ENCODE measurements at regions of chr4 and their contacts with region 1.

Region 1: DNA sequence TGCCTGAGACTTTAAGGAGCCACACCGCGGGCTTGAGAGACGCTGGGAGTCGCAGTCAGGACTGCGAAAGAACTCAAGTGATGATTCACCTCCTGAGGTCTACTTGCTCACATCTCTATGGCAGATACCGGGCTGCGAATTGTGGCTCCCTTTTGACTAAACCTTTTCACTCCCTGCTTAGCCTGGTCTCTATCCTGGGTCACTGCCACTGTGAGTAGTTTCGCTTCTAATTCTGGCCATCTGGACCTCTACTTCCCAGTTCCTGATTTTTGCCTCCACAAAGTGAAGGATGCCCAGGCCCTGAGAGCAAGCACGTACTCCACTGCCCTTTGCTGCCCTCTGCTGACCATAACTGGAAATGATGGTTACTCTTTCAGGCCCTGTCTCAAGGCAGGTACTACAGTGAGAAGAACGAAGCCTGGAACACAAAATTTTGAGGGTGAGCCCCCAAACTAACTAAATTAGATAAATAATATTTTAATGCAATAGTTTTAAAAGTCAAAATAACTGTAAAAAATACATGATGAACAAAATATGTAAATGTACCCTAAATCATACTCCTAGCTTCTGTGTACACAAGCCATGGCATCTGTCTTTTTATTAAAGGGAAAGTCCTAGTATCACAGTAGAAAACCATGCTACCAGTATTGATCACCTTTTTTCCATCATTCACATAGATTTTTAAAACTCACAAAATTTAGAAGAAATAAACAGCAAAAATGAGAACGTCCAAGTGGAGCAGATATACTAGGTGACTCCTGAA is 16.7 kb downstream of the MAD2L1 start:
- DNase-seq: no peak
- ATAC-seq: peak; percentile 94

Region 2: GRCh38 chr4:119314356-119314755 is 735.6 kb before region 1 on chr4:
- intact Hi-C with region 1: loop called (anchors 2 kb)
- DNase-seq: no peak
- ATAC-seq: peak; percentile 69

Region 3: DNA sequence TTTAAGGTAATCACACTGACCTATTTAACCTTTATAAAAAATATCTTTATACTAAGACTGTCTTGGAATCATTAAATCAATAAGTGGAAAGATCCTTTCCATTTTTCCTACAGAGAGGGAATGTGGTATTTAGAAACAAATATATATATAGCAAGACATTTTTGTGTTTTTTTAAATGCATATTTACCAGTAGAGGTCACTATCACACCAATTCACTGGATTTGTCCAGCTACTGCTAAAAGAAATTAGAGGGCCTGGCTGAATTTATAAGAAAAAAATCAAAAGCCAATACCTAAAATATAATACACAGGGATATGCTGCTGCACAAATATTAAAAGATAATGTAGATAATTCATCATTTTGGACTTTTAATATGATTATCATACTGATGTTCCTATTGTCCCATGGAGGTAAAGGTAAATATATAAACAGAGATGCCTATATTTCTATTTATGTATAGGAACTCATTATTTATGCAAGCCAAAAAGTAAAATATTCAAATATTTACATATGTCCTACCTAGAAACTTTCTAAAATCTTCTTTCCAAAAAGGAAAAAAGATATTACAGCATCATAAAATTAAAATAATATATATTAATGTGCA is 490.8 kb before region 1 on chr4:
- intact Hi-C with region 1: loop called (anchors 5 kb)
- DNase-seq: no peak
- ATAC-seq: no peak

Region 4: DNA sequence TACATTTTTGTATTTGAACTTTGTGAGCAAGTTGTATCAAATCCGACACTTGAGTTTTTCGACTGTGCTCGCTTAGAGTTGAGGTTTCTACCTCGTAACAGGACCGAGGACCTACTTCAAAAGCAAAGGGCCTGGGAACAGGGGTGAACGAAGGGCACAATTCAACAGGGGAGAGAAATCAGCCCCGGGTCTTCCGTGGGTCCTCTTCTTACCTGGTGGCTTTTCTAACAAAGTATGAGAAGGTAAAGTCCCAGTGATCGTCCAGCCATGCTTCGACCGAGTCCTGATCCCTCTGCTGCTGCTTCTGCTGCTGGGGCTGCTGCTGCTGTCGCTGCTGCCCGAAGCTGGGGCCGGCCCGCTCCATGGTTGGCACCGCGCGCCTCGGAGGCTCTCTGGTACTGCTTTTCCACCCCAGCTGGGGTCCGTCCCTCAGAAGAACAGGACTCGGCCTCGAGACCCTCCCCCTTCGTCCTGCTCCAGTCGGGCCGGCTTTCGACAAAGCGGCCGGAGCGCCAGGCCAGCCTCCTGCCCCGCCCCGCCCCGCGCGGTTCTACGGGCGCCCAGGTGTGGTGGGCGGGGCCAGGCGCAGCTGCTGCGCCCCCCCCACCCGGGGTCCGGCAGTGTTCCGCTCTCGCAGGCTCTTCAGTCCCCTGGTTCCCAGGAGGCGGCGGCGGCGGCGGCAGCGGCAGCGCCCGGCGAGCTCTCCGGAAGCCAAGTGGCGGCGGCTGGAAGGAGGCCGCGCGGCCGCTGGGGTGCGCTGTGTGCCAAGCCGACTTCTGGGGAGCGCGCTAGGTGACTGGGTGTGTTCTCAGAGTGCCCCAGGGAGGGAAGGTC is 421.4 kb before region 1 on chr4 and contains the start of gene PDE5A:
- intact Hi-C with region 1: loop called (anchors 2 kb)
- DNase-seq: peak; percentile 88
- ATAC-seq: peak; percentile 87
- total RNA-seq, gene PDE5A: 7.4 TPM

Region 5: GRCh38 chr4:119692001-119692400 is 357.9 kb before region 1 on chr4:
- intact Hi-C with region 1: loop called (anchors 2 kb)
- DNase-seq: no peak
- ATAC-seq: peak; percentile 62

Region 6: DNA sequence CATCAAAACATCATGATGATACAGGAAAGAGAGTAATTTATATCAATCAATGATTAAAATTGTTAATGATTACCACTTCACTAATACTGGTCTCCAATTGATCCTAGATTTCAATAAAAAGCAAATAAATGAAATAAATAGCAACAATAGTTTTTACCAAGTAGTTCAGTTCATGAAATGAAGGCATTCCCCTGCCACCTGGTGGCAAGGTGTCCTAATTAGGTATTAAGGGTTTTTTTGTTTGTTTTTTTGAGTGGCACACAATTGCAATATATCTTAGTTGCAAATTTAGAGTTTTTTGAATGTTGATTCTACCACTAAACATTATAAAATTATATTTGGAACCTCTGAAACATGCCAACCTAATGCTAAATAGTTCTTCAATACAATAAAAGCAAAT is 263.9 kb before region 1 on chr4:
- intact Hi-C with region 1: loop called (anchors 10 kb)
- DNase-seq: no peak
- ATAC-seq: no peak

Region 7: GRCh38 chr4:120753854-120754253 is 703.9 kb after region 1 on chr4:
- intact Hi-C with region 1: no loop called
- DNase-seq: no peak
- ATAC-seq: peak; percentile 90